HCT116 (cell line): ENCODE measurements at regions of chr17 and their contacts with region 1.

Region 1: DNA sequence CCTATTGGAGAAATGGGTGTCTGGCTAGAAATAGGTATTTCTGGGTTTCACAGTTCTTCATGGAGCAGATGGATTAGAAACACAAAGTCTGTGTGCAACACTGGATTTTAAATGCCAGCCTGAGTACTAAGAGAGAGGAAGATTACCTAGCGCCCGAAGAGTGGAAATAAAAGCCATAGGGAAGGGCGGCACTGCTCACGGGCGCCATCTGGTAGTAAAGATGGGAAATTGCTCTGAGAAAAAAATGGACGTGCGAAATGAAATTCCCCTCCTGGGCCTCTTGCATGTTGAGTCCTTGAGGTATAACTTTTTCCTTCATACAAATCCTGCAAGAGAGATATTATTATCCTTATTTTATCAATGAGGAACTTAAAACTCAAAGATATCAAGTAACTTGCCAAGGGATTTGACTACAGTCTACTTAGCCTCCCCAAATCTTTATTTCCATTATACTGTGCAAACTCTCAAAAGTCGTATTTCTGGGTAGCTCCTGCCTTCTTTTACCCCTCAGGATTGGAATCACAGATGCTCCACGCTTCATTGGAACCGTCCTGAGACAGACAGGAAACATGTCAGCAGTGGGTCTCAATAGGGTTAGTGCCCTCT is 72.8 kb downstream of the MMD start:
- DNase-seq: peak; percentile 42
- ATAC-seq: peak; percentile 91
- H3K4me3 ChIP-seq: no peak overlapping the region
- H3K27ac ChIP-seq: no peak overlapping the region
- H3K4me1 ChIP-seq: no peaks in the 10 kb centered on the region
- H3K27me3 ChIP-seq: no peaks in the 10 kb centered on the region
- CTCF ChIP-seq: peak; percentile 82 to 98 (median 91)
- POLR2A ChIP-seq: no peak
- RAD21 ChIP-seq: peak; percentile 85

Region 2: DNA sequence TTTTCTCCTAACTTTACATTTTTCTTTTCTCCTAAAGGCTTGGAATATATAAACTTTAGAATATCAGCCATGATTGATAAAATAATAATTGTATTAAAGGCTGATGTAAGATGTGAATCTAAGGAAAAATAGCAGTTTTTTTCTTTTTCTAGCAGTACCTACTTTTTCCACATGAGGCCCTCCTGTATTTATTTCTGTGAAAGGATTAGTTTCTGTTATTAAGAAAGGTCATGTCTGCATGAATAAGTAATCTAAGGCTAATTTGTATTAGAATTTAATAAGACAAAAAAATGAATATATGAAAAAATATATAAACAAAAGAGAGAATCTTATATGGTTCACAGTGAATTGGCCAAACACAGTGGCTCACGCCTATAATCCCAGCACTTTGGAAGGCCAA is 295.0 kb before region 1 on chr17:
- CTCF ChIA-PET with region 1: interaction called, 3 read pairs
- POLR2A ChIA-PET with region 1: no interaction called
- RAD21 ChIA-PET with region 1: no interaction called
- intact Hi-C with region 1: loop called (anchors 1 kb)
- DNase-seq: no peak
- ATAC-seq: peak; percentile 54
- H3K4me3 ChIP-seq: no peak overlapping the region
- H3K27ac ChIP-seq: no peak overlapping the region
- H3K4me1 ChIP-seq: no peaks in the 10 kb centered on the region; a peak in 1 of 4 replicates
- H3K27me3 ChIP-seq: no peaks in the 10 kb centered on the region
- CTCF ChIP-seq: peak; percentile 40 to 60 (median 56); a peak in 5 of 6 replicates
- POLR2A ChIP-seq: no peak
- RAD21 ChIP-seq: peak; percentile 67

Region 3: GRCh38 chr17:55303008-55303493 is 45.8 kb before region 1 on chr17:
- CTCF ChIA-PET with region 1: no interaction called
- POLR2A ChIA-PET with region 1: no interaction called
- RAD21 ChIA-PET with region 1: no interaction called
- intact Hi-C with region 1: no loop called
- DNase-seq: no peak
- ATAC-seq: no peak
- H3K4me3 ChIP-seq: no peak overlapping the region
- H3K27ac ChIP-seq: no peak overlapping the region
- H3K4me1 ChIP-seq: no peaks in the 10 kb centered on the region
- H3K27me3 ChIP-seq: no peaks in the 10 kb centered on the region
- CTCF ChIP-seq: no peak
- POLR2A ChIP-seq: no peak
- RAD21 ChIP-seq: no peak